Aorta (tissue), 5 donors: ENCODE measurements at regions of chr20 and their contacts with region 1.

Region 1: DNA sequence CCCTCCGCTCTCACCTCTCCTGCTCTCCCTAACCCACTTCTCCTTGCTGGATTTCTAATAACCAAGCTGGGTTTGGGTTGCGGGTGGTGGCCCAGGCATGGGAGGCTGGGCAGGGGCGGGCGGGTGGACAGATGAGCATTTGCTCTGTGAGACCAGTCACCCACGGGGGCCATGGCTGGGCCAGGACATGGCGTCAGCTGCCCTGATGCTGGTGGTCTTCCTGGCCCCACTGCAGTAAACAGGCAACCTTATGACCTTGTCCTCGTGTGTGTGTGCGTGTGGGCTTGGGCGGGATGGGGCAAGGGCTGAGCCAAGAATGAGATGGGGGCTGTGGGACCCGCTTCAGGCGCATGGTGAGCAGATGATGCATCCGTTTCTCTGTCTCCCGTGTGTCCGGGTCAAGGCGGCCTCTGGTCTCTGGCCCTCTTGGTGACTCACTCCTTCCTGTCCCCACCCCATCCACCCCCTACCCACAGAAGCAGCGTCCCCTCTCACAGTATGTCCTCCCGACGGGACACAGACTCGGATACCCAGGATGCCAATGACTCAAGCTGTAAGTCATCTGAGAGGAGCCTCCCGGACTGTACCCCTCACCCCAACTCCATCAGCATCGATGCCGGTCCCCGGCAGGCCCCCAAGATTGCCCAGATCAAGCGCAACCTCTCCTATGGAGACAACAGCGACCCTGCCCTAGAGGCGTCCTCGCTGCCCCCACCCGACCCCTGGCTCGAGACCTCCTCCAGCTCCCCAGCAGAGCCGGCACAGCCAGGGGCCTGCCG is 41.4 kb upstream of the MYL9 start:
- DNase-seq: no peak
- ATAC-seq: no peak
- H3K4me3 ChIP-seq: no peak overlapping the region
- H3K27ac ChIP-seq: no peak overlapping the region
- H3K4me1 ChIP-seq: peaks cover 0 to 4% of the 10 kb centered on the region in 2 donors
- H3K27me3 ChIP-seq: no peaks in the 10 kb centered on the region

Region 2: DNA sequence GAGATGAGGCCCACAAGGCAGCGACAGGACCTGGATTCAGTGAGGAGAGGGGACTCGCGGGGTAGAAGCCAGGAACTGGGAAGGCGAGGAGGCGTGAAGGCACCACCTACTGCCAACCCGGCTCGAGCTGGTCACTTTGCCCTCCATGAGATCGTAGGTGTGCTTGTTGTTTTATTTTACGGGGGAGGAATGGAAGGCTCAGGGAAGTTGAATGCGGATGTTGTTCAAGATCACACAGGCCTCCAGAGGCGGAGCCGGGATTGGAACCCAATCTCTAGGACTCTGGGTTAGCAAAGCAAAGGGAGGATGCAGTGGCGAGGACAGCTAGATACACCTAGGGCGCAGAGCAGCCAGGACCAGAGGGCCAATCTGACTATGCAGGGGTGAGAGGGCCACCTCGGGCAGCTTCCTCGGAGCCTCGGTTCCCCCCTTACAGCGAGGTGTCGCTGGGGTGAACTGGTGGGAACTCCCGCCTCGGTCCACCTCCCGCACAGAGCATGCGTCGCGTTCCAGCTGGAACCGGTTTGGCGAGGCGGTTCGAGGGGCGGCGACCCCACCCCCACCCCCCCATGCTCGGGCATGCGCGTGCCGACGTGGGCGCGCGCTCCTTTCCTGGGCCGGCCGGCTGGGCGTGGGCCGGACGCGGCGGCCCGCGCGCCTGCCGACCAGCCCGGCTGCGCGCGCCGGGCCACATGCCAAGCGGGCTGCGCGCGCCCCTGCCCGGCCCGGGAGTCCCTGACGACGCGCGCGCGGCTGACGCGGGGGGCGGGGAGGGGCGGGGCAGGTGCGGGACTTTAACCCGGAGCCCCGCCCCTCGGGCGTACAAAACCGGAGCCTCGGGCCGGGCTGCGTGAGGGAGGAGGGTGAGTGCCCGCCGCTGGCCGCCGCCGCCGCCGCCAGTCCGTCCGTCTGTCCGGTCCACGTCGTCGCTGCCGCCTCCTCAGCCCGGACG is 39.0 kb before region 1 on chr20:
- intact Hi-C with region 1: loop called in 1 of 2 experiments (anchors 5 kb)
- DNase-seq: peak; percentile 95 to 98
- ATAC-seq: peak; percentile 86
- H3K4me3 ChIP-seq: peak overlapping the region; percentile 84 to 97
- H3K27ac ChIP-seq: peak overlapping the region; percentile 90 to 93
- H3K4me1 ChIP-seq: peaks cover 0 to 5% of the 10 kb centered on the region in 2 donors
- H3K27me3 ChIP-seq: no peaks in the 10 kb centered on the region

Region 3: DNA sequence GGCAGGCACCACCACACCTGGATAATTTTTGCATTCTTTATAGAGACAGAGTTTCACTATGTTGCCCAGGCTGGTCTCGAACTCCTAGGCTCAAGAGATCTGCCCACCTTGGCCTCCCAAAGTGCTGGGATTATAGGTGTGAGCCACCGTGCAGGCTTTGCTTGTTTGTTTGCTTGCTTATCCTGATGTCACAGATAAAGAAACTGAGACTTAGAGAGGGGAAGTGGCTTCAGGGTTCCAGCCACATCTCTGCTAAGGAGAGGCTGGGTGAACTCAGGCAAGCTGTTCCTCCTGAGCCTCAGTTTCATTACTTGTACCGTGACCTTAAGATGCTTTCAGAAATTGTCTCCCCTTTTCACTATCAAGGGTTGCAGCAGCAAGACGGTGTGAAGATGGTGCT is 327.6 kb after region 1 on chr20:
- intact Hi-C with region 1: no loop called
- DNase-seq: no peak
- ATAC-seq: no peak
- H3K4me3 ChIP-seq: no peak overlapping the region
- H3K27ac ChIP-seq: no peak overlapping the region
- H3K4me1 ChIP-seq: peaks cover 3 to 6% of the 10 kb centered on the region in 2 donors
- H3K27me3 ChIP-seq: no peaks in the 10 kb centered on the region